MCF 10A (cell line): ENCODE measurements at regions of chr12 and their contacts with region 1.

Region 1: GRCh38 chr12:83005534-83006197 is 319.0 kb downstream of the TMTC2 start:
- DNase-seq: no peak
- H3K4me3 Mint-ChIP-seq: no peak overlapping the region
- H3K27ac Mint-ChIP-seq: no peak overlapping the region
- H3K4me1 Mint-ChIP-seq: no peaks in the 10 kb centered on the region
- H3K27me3 Mint-ChIP-seq: no peaks in the 10 kb centered on the region
- CTCF ChIP-seq: no peak

Region 2: GRCh38 chr12:82583756-82584155 is 421.9 kb before region 1 on chr12:
- CTCF ChIA-PET with region 1: no interaction called
- POLR2A ChIA-PET with region 1: no interaction called
- intact Hi-C with region 1: no loop called
- DNase-seq: no peak
- H3K4me3 Mint-ChIP-seq: no peak overlapping the region
- H3K27ac Mint-ChIP-seq: no peak overlapping the region
- H3K4me1 Mint-ChIP-seq: no peaks in the 10 kb centered on the region
- H3K27me3 Mint-ChIP-seq: no peaks in the 10 kb centered on the region
- CTCF ChIP-seq: no peak

Region 3: DNA sequence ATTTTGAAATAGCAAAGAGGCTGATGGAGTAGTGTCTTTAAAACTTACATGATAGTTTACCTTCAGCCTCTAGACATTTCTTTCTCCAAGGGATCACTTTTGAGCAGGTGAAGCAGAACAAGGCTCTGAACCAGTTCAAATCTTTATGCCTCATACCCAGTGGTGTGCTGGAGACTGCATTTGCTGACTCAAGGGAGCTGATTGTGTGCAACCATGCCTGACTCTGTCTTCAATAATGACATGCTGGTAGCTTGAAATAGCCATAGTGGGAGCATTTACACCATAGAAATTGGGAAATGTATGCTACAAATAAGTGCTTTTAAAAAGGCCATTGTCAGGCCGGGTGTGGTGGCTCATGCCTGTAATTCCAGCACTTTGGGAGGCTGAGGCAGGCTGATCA is 163.1 kb after region 1 on chr12:
- CTCF ChIA-PET with region 1: no interaction called
- POLR2A ChIA-PET with region 1: no interaction called
- intact Hi-C with region 1: no loop called
- DNase-seq: no peak
- H3K4me3 Mint-ChIP-seq: no peak overlapping the region
- H3K27ac Mint-ChIP-seq: no peak overlapping the region
- H3K4me1 Mint-ChIP-seq: no peaks in the 10 kb centered on the region
- H3K27me3 Mint-ChIP-seq: no peaks in the 10 kb centered on the region
- CTCF ChIP-seq: no peak

Region 4: GRCh38 chr12:83622205-83622604 is 616.5 kb after region 1 on chr12:
- CTCF ChIA-PET with region 1: no interaction called
- POLR2A ChIA-PET with region 1: no interaction called
- intact Hi-C with region 1: no loop called
- DNase-seq: no peak
- H3K4me3 Mint-ChIP-seq: no peak overlapping the region
- H3K27ac Mint-ChIP-seq: no peak overlapping the region
- H3K4me1 Mint-ChIP-seq: peaks cover 8% of the 10 kb centered on the region
- H3K27me3 Mint-ChIP-seq: no peaks in the 10 kb centered on the region
- CTCF ChIP-seq: no peak

Region 5: GRCh38 chr12:84397263-84397662 is 1391.6 kb after region 1 on chr12:
- CTCF ChIA-PET with region 1: interaction called, 7 read pairs
- POLR2A ChIA-PET with region 1: no interaction called
- intact Hi-C with region 1: loop called (anchors 10 kb)
- DNase-seq: peak; percentile 12
- H3K4me3 Mint-ChIP-seq: no peak overlapping the region
- H3K27ac Mint-ChIP-seq: no peak overlapping the region
- H3K4me1 Mint-ChIP-seq: no peaks in the 10 kb centered on the region
- H3K27me3 Mint-ChIP-seq: no peaks in the 10 kb centered on the region
- CTCF ChIP-seq: peak; percentile 36

Region 6: DNA sequence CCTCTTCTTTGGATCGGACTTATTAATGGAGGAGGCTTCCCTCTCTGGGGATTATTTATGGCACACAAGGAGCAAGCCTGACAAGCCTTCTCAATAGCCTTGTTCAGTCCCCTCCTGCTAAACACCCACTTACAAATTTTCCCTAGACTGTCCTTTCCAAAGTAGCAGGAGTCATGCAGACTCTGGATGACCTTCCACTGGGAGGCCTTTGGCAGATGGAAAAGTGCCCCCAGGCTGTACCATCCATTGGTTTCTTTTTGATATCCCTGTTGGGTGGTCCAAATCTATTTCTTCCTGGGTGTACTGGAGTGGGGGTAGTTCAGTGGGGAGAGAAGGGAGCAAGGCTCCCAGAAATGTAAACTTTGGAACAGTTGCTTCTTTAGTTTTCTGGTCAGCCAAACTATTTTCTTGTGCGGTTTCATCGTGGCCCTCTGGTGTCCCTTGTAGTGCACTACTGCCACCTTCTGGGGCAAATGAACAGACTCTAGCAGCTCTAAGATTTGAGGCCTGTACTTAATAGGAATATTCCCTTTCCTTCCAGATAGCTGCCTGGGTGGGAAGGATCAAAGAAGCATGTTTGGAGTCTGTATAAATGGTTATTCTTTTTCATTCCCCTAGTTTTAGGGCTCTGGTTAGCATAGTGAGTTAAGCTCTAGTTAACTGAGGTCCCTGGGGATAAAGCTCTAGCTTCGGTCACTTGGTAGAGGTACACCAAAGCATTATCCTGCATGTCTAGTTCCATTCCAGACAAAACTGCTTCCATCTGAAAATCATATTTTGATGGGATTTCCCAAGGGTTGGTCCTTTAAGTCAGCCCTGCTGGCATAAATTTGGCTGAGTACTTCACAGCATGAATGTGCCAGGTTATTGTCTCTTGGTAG is 1497.5 kb after region 1 on chr12:
- CTCF ChIA-PET with region 1: interaction called, 3 read pairs
- POLR2A ChIA-PET with region 1: no interaction called
- intact Hi-C with region 1: loop called (anchors 1 kb)
- DNase-seq: peak; percentile 76
- H3K4me3 Mint-ChIP-seq: no peak overlapping the region
- H3K27ac Mint-ChIP-seq: no peak overlapping the region
- H3K4me1 Mint-ChIP-seq: peaks cover 23% of the 10 kb centered on the region
- H3K27me3 Mint-ChIP-seq: no peaks in the 10 kb centered on the region
- CTCF ChIP-seq: peak; percentile 51